Left colon (tissue), 2 donors: ENCODE measurements at regions of chr10 and their contacts with region 1.

Region 1: GRCh38 chr10:71378336-71379117 is 18.2 kb upstream of the CDH23 start:
- DNase-seq: no peak
- ATAC-seq: peak; percentile 26

Region 2: DNA sequence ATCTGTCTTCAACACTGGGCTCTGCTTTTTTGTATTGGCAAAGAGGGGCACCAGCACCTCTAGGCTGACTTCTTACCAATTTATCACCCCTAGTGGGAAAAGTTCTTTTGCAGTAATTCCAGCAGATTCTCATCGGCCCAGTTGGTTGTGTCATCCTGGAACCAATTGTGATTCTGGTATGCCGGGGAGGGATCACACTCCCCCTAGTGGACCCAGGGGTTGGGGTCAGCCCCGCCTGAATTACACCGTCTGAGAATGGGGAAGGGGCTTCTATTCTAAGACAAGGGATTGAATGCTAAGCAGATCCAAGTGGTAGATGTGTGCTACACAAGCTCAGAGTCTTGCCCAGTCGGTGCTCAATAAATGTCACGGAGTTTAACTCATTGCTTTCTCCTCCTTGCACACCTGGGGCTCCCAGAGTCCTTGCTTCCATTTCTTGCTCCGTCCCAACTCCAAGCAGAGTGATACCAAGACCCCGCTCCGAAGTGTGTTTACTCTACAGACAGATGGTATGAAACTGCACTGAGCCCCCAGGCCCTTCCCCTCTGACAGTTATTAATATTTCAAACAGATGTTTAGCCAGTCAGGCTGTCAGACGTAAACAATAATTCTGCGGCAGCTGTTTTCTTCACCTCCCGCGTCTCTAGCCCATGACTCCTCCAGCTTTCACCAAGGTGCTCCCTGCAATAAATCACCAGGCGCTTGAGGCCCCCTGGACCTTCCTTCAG is 269.2 kb after region 1 on chr10:
- intact Hi-C with region 1: no loop called
- DNase-seq: no peak
- ATAC-seq: no peak

Region 3: GRCh38 chr10:71708301-71708703 is 329.8 kb after region 1 on chr10:
- intact Hi-C with region 1: loop called in 1 of 2 experiments (anchors 5 kb)
- DNase-seq: peak in 1 of 2 donors; percentile 74
- ATAC-seq: peak; percentile 73